Transverse colon (tissue), 4 donors: ENCODE measurements at regions of chr6 and their contacts with region 1.

Region 1: DNA sequence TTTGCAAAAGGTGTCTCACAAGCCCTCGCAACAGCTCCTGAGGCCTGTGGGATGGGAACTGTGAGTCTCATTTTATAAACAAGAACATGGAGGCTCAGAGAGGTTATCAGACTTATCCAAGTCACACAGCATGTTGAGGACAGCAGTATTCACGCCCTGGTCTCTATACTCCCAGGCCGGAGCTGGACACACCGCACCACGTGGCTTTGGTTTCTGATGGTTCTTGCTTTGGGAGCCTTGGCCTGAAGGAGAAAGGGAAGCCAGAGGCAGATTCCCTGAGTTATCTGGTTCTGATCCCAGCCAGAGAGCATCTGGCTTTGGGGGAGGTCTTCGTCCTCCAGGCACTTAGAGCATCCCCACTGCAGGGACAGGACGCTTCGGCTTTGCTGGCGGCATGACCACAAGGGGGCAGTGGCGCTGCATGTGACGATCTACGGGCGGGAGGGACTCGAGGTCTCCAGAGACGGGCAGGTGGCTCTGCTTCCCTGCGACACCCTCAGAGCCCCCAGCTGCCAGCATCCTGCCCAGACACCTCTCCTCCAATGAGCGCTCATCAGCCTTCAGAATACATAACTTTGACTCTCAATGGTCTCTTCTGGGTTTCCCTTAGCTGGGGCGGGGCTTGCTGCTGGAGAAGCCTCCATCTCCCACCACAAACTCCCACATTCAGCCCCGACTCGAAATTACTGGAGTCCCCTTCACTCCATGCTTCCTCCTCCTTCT is 51.4 kb upstream of the SAYSD1 start:
- DNase-seq: peak; percentile 84
- H3K4me3 ChIP-seq: no peak overlapping the region
- H3K27ac ChIP-seq: no peak overlapping the region
- H3K4me1 ChIP-seq: peaks cover 0 to 30% (median 20%) of the 10 kb centered on the region in 4 donors
- H3K27me3 ChIP-seq: peaks cover 3% of the 10 kb centered on the region
- CTCF ChIP-seq: peak; percentile 82 to 94 (median 86)
- EP300 ChIP-seq: no peak
- POLR2A ChIP-seq: no peak

Region 2: GRCh38 chr6:38871741-38872568 is 294.4 kb before region 1 on chr6:
- in situ Hi-C with region 1: loop called in 2 of 4 experiments (anchors 25 kb)
- intact Hi-C with region 1: no loop called
- DNase-seq: peak; percentile 47
- H3K4me3 ChIP-seq: no peak overlapping the region
- H3K27ac ChIP-seq: no peak overlapping the region
- H3K4me1 ChIP-seq: no peaks in the 10 kb centered on the region
- H3K27me3 ChIP-seq: peaks cover 11% of the 10 kb centered on the region
- CTCF ChIP-seq: peak; percentile 73 to 84 (median 77)
- EP300 ChIP-seq: no peak
- POLR2A ChIP-seq: no peak